ENCODE measurements at regions of chr9 and their contacts with region 1.

Region 1: DNA sequence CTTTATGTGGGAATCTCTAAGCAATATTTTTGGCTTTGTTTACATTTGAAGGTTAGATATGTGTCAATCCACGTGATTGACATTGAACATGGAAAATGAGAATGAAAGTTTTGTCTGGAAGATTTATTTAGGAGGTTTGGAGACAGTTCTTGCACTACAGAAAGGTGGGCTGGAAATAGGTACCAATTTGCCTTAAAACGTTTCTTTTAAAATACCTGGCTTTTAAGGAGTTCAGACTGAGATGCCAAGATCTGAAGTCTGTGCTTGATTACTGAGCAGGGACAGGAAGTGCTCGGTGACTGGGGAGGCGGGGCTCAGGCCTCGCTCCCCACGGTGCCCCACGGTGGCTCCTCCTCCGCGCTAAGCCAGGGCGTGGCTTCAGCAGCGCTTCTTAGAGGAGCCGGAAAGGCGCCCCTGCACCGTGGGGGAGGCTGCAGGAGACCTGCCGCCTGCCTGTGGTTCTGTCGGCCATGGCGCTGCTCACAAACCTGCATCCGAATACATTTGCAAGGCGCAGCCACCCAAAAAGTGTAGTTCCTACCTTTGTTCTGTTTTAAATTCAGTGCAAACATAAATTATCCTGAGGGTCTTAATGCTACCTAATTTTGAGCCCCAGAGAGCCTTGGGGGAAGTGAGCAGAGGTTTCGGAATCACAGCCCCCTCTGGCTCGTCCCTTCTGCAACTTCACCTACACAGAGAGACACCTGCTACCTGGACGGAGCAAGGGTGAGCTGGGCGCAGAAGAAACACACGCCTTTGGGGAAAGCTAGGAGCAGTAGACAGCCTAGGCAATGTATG is 49.2 kb downstream of the USP20 start:
- DNase-seq: peak; percentile 86 to 97 (median 96)
- ATAC-seq: peak; percentile 69
- H3K4me3 ChIP-seq: peak overlapping the region; percentile 58
- H3K4me3 Mint-ChIP-seq: peak overlapping the region; percentile 85 to 98 (median 94)
- H3K27ac ChIP-seq: peak overlapping the region; percentile 99
- H3K27ac Mint-ChIP-seq: peak overlapping the region; percentile 97 to 100 (median 100)
- H3K4me1 ChIP-seq: peaks cover 20 to 37% of the 10 kb centered on the region in 2 donors
- H3K4me1 Mint-ChIP-seq: peaks cover 37 to 57% (median 48%) of the 10 kb centered on the region in 7 donors
- H3K27me3 ChIP-seq: no peaks in the 10 kb centered on the region
- H3K27me3 Mint-ChIP-seq: peaks cover 0 to 4% (median 0%) of the 10 kb centered on the region in 5 donors

Region 2: DNA sequence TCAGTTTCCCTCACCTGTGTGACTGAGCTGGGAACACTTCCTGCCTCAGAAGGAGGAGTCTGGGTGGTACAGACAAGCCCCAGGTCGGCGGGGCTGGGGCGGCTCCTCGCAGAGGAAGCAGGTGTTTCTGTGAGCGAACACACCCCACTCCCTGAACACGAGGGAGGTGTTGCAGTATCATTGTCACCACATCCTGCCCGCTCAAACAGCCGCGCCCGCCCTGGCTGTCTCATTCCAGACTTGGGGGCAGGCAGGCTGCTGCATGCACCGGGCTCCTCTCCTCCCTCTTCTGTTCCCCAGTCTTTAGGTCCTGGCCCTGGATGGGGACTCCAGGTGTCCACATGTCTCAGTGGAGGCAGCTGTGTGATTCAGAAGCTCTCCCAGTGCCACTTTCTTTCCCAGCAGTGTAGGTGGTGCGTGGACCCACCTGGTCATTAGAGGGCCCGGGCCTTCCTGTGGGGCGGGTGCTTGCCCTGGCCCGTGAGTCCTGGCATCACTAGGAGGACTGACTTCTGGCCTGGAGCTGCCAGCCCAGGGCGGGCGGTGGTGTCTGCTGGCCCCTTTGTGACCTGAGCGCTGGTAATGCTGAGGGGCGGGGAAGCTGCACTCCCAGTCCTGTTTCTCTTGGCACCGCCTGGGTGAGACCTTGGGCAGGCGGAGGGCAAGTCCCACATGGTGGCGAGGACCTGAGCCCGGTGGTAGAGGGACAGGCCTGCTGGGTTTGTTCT is 981.9 kb before region 1 on chr9:
- CTCF ChIA-PET with region 1: no interaction called
- POLR2A ChIA-PET with region 1: no interaction called
- intact Hi-C with region 1: no loop called
- DNase-seq: peak; percentile 61 to 93 (median 90)
- ATAC-seq: peak; percentile 95
- H3K4me3 ChIP-seq: peak overlapping the region; percentile 55
- H3K4me3 Mint-ChIP-seq: peak overlapping the region; percentile 76 to 87 (median 84)
- H3K27ac ChIP-seq: peak overlapping the region; percentile 89
- H3K27ac Mint-ChIP-seq: peak overlapping the region; percentile 85 to 98 (median 96)
- H3K4me1 ChIP-seq: peaks cover 64 to 65% of the 10 kb centered on the region in 2 donors
- H3K4me1 Mint-ChIP-seq: peaks cover 32 to 84% (median 73%) of the 10 kb centered on the region in 7 donors
- H3K27me3 ChIP-seq: no peaks in the 10 kb centered on the region
- H3K27me3 Mint-ChIP-seq: no peaks in the 10 kb centered on the region

Region 3: DNA sequence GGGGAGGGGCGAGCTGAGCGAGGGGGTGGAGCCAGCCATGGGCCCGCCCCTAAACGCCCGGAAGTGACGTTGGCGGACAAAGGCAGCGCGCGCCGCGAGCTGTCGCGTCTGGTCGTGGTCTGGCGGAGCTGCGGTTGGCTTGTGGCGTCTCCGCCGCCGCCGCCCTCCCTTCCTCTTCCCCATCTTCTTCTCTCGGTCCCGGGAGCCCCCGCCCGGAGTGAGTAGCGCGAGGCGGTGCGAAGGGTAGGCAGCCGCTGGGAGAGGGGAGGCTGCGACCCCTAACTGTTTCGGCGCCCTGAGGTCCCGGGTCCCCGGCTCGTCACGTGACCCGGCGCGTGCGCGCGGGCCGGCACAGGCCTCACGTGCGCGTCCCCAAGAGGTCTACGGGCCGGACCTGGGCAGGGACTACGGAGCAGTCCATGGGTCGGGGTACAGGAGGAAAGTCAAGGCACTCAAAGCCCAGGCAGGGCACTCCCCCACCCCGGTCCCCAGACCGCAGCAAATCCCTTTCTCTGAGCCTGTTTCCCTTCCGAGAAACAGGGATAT is 258.3 kb before region 1 on chr9 and contains the start of gene NTMT1:
- CTCF ChIA-PET with region 1: interaction called, 4 read pairs
- POLR2A ChIA-PET with region 1: no interaction called
- intact Hi-C with region 1: loop called in 1 of 2 experiments (anchors 5 kb)
- DNase-seq: peak; percentile 88 to 94 (median 90)
- ATAC-seq: peak; percentile 93
- H3K4me3 ChIP-seq: peak within 1 kb of the TSS; percentile 85
- H3K4me3 Mint-ChIP-seq: peak within 1 kb of the TSS; percentile 85 to 95 (median 88)
- H3K27ac ChIP-seq: peak within 1 kb of the TSS; percentile 89
- H3K27ac Mint-ChIP-seq: peak within 1 kb of the TSS; percentile 88 to 99 (median 94)
- H3K4me1 ChIP-seq: peaks cover 27 to 42% of the 10 kb centered on the region in 2 donors
- H3K4me1 Mint-ChIP-seq: peaks cover 33 to 63% (median 59%) of the 10 kb centered on the region in 7 donors
- H3K27me3 ChIP-seq: no peaks in the 10 kb centered on the region
- H3K27me3 Mint-ChIP-seq: peaks cover 4 to 18% (median 7%) of the 10 kb centered on the region in 5 donors
- total RNA-seq, gene NTMT1: 31.0 to 50.1 (median 34.2) TPM

Region 4: DNA sequence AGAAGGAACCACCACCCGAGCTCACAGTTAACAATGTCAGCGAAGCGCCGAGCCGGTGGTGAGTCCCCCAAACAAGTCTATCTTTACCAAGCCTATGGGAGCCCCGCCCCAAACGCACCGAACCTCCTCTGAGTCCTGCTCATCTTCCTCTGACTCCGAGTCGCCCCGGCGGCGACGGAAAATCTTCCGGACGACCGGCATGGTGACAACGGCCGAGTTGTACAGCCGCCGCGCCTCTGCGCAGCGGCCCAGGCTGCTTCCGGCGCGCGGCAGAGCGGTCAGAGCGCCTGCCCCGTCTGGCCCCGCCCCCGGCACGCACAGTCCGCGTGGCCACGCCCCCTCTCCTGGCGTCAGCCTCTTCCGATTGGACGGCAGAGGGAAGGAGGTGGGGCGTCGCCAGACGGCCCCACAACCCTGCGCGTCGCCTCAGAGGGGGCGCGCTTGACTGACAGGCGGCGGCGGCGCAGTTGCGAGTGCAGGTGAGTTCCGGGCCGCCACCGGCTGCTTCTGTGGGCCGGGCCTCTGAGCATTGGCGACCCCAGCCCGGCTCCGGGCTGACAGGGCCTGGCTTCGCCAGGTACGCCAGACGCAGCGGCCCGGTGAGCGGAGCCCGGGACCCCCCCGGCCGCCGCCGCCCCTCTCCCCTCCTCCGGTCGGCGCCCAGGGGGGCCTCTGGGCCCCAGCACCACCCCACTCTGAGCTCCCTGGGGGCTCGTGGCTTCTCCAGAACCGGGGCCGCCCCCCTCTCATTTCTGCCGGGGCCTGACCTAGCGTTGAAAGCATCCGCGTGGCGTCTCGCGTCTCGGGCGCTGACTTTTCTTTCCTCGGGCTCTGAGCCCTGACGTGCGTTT is 49.2 kb before region 1 on chr9 and contains the starts of genes C9orf78 and USP20:
- CTCF ChIA-PET with region 1: interaction called, 10 read pairs
- POLR2A ChIA-PET with region 1: interaction called, 154 read pairs
- intact Hi-C with region 1: loop called (anchors 1 kb)
- DNase-seq: peak; percentile 95 to 99 (median 98)
- ATAC-seq: peak; percentile 98
- H3K4me3 ChIP-seq: peak within 1 kb of the TSS; percentile 96
- H3K4me3 Mint-ChIP-seq: peak within 1 kb of the TSS; percentile 86 to 99 (median 98)
- H3K27ac ChIP-seq: peak within 1 kb of the TSS; percentile 97
- H3K27ac Mint-ChIP-seq: peak within 1 kb of the TSS; percentile 91 to 99 (median 98)
- H3K4me1 ChIP-seq: peaks cover 36 to 50% of the 10 kb centered on the region in 2 donors
- H3K4me1 Mint-ChIP-seq: peaks cover 41 to 65% (median 57%) of the 10 kb centered on the region in 7 donors
- H3K27me3 ChIP-seq: no peaks in the 10 kb centered on the region
- H3K27me3 Mint-ChIP-seq: no peaks in the 10 kb centered on the region
- total RNA-seq, gene C9orf78: 66.2 to 118 (median 95.8) TPM
- total RNA-seq, gene USP20: 94.9 to 156 (median 118) TPM

Region 5: DNA sequence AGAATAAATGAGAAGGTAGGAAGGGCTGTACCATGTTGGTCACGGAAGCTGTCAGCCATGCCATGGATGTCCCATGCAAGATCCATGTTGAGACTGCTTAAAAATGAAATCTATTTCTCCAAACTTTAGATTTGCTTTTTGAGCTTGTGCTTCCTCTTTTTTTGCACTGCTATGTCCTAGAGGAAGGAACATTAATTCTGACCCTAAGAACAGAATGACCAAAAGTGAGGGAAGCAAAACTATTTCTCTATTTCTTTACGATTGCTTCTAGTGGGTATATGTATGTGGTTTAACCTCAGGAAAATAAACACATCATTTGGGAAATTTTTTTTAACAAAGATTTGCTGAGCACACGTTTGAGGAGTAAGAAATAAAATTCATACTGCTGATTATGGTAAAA is 35.4 kb after region 1 on chr9:
- CTCF ChIA-PET with region 1: interaction called, 6 read pairs
- POLR2A ChIA-PET with region 1: interaction called, 3 read pairs
- intact Hi-C with region 1: loop called in 1 of 2 experiments (anchors 5 kb)
- DNase-seq: no peak
- ATAC-seq: peak; percentile 34
- H3K4me3 ChIP-seq: no peak overlapping the region
- H3K4me3 Mint-ChIP-seq: no peak overlapping the region
- H3K27ac ChIP-seq: no peak overlapping the region
- H3K27ac Mint-ChIP-seq: peak overlapping the region in 8 of 9 donors; percentile 8 to 84 (median 71)
- H3K4me1 ChIP-seq: peaks cover 0 to 9% of the 10 kb centered on the region in 2 donors
- H3K4me1 Mint-ChIP-seq: peaks cover 6 to 55% (median 16%) of the 10 kb centered on the region in 7 donors
- H3K27me3 ChIP-seq: no peaks in the 10 kb centered on the region
- H3K27me3 Mint-ChIP-seq: no peaks in the 10 kb centered on the region

Region 6: DNA sequence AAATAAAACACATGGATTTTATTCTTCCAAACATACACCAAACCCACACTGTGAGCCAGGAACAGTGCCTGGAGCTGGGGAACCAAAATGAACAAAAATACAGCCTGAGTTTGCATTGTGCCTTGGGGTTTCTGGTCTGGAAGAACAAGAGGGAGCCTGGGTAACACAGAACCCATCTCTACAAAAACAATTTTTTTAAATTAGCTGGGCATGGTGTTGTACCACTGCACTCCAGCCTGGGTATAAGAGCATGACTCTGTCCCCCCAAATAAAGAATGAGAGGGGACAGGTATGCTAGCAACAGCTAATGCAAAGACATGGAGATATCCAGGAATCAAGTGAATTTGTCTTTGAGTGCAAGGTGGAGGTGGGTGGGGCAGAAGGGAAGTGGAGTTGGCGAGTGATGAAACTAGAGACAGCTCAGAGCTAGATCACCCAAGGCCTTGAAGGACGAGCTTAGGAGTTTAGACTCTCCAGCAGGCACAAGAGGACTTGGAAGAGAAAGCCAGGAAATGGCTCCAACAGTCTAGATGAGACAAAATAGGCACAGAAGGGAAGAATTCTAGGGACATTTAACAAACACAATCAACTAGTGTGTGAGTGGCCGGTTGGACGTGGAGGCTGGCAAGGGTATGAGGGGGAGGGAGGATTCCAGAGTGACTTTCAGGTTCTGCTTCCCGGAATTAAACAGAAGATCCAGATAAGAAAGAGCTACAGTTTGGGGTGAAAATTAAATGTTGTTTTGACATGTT is 111.2 kb after region 1 on chr9:
- CTCF ChIA-PET with region 1: interaction called, 3 read pairs
- POLR2A ChIA-PET with region 1: interaction called, 11 read pairs
- intact Hi-C with region 1: no loop called
- DNase-seq: no peak
- ATAC-seq: peak; percentile 67
- H3K4me3 ChIP-seq: no peak overlapping the region
- H3K4me3 Mint-ChIP-seq: peak overlapping the region; percentile 41 to 86 (median 74)
- H3K27ac ChIP-seq: peak overlapping the region; percentile 61
- H3K27ac Mint-ChIP-seq: peak overlapping the region; percentile 89 to 98 (median 94)
- H3K4me1 ChIP-seq: peaks cover 53 to 65% of the 10 kb centered on the region in 2 donors
- H3K4me1 Mint-ChIP-seq: peaks cover 48 to 83% (median 77%) of the 10 kb centered on the region in 7 donors
- H3K27me3 ChIP-seq: no peaks in the 10 kb centered on the region
- H3K27me3 Mint-ChIP-seq: no peaks in the 10 kb centered on the region

Region 7: DNA sequence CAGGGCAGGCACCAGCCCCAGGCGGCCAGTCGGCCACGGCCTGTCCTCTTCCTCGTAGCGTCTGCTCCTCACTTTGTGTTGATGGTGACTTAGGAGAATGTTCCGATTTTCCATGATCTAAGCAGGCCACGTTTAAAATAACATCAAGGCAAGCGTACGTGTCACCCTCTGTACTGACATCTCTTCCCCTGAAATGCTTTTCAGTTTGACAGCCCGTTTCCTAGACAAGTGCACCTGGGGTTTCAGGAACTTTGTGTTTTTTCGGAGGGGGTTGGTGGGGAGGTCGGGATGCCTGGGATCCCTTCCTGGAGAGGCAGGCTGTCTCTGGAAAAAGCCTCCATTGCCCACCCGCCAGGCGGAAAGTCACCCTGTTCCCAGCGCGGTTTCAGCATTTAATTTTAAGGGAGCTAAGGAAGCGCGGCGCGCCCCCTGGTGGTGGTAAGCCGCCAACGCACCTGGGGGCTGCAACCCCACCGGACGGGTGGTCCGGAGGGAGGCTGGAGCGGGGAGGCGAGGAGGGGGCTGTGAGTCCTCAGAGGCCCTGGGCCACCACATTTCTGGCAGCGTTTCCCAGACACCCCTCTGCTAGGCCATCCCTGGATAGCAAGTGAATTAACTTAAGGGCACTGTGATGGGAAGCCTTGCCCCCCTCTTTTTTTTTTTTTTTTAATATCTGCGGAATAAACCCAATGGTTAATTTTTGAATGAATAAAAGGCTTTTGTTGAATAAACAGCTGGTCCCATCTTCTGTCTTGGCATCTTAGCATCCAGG is 351.7 kb after region 1 on chr9:
- CTCF ChIA-PET with region 1: no interaction called
- POLR2A ChIA-PET with region 1: no interaction called
- intact Hi-C with region 1: loop called in 1 of 2 experiments (anchors 5 kb)
- DNase-seq: peak; percentile 41 to 79 (median 63)
- ATAC-seq: peak; percentile 79
- H3K4me3 ChIP-seq: no peak overlapping the region
- H3K4me3 Mint-ChIP-seq: peak overlapping the region in 7 of 10 donors; percentile 24 to 75 (median 54)
- H3K27ac ChIP-seq: no peak overlapping the region
- H3K27ac Mint-ChIP-seq: peak overlapping the region in 1 of 9 donors; percentile 43
- H3K4me1 ChIP-seq: peaks cover 7 to 11% of the 10 kb centered on the region in 2 donors
- H3K4me1 Mint-ChIP-seq: peaks cover 0 to 25% (median 15%) of the 10 kb centered on the region in 7 donors
- H3K27me3 ChIP-seq: no peaks in the 10 kb centered on the region
- H3K27me3 Mint-ChIP-seq: peaks cover 0 to 2% (median 0%) of the 10 kb centered on the region in 5 donors

Measured in naive thymus-derived CD4-positive, alpha-beta T cell (primary cell).